ENCODE measurements at regions of chr11 and their contacts with region 1.

Region 1: GRCh38 chr11:36702330-36703055 is 104.5 kb upstream of the RAG2 start:
- DNase-seq: peak; percentile 73
- ATAC-seq: peak; percentile 91 to 98
- H3K4me3 ChIP-seq: no peak overlapping the region
- H3K27ac ChIP-seq: no peak overlapping the region
- H3K4me1 ChIP-seq: no peaks in the 10 kb centered on the region
- CTCF ChIP-seq: peak; percentile 80
- EP300 ChIP-seq: no peak
- POLR2A ChIP-seq: no peak
- RAD21 ChIP-seq: peak; percentile 87 to 89

Region 2: DNA sequence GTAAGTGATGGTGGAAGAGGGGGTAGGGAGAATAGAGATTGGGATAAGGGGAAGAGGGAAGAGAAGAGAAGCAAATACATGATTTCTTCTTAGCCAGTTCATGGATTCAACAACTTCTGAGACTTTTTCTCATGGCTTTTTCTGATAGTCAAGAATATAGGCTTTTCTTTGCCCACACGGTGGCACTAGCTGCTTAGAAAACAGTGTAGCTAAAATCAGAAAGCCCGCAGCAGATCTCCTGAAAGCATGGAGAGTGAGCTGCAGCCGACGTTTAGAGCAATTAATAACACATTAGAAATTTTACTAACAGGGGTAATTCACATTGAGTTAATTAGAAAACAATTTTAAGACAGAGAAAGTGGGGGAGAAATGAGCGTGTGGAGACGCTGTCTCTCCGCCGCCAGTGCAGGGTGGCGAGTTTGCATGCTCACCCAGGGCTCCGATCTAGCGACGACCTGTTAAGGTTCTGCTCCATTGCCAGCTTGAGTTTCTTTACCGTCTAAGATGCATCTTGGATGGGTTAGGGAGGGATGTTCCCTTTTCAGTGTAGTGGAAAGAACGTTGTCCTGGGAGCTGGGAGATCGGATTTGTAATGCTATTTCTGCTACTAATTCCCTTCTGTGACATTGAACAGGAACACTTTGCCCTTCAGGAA is 138.0 kb before region 1 on chr11:
- CTCF ChIA-PET with region 1: interaction called, 17 read pairs
- POLR2A ChIA-PET with region 1: no interaction called
- DNase-seq: peak; percentile 15 to 56
- ATAC-seq: peak; percentile 89 to 93
- H3K4me3 ChIP-seq: peak overlapping the region; percentile 30; the same call in 2 of the 3 replicates
- H3K27ac ChIP-seq: no peak overlapping the region
- H3K4me1 ChIP-seq: no peaks in the 10 kb centered on the region
- CTCF ChIP-seq: peak; percentile 88
- EP300 ChIP-seq: no peak
- POLR2A ChIP-seq: no peak
- RAD21 ChIP-seq: peak; percentile 81 to 86

Region 3: GRCh38 chr11:36622431-36623136 is 79.9 kb before region 1 on chr11:
- CTCF ChIA-PET with region 1: no interaction called
- POLR2A ChIA-PET with region 1: no interaction called
- DNase-seq: peak; percentile 4 to 40
- ATAC-seq: peak; percentile 84 to 87; a peak in 5 of 6 replicates
- H3K4me3 ChIP-seq: no peak overlapping the region
- H3K27ac ChIP-seq: no peak overlapping the region
- H3K4me1 ChIP-seq: no peaks in the 10 kb centered on the region
- CTCF ChIP-seq: peak; percentile 44
- EP300 ChIP-seq: no peak
- POLR2A ChIP-seq: no peak
- RAD21 ChIP-seq: peak; percentile 42 to 59; a peak in 4 of 5 replicates

Region 4: DNA sequence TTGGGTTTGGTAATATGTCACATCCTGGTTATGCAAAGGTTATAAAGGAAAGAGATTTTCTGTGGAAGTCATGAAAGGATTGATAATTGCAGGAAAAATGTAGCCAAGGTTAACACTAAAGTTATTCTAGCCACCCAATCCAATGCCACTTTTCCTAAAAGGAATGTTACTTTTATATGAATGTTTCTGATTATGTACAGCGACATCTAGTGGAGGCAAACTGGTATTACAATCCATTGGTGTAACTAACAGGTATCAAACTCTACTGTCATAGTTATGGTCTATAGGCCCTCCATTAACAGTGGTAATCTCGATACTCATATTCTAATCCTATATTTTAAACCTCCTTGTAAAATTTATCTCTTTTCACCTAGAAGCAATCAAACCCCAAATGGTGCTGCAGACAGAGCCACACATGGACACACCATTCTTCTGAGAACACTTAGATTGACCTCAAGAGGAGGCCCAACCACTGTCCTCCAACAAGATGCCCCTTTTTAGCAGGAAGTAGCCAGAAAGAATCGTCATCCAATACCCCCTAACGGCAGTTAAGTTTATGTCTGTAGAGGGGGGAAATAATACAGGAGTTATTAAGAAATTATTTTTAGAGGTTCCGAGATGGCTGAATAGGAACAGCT is 29.6 kb before region 1 on chr11:
- CTCF ChIA-PET with region 1: interaction called, 10 read pairs
- POLR2A ChIA-PET with region 1: no interaction called
- DNase-seq: peak in 1 of 2 experiments; percentile 58
- ATAC-seq: peak in 1 of 2 experiments; percentile 59; a peak in 3 of 6 replicates
- H3K4me3 ChIP-seq: no peak overlapping the region
- H3K27ac ChIP-seq: no peak overlapping the region
- H3K4me1 ChIP-seq: no peaks in the 10 kb centered on the region
- CTCF ChIP-seq: peak; percentile 57
- EP300 ChIP-seq: no peak
- POLR2A ChIP-seq: no peak
- RAD21 ChIP-seq: peak in 1 of 2 experiments; percentile 38; a peak in 2 of 5 replicates

Region 5: GRCh38 chr11:36688571-36689291 is 13.8 kb before region 1 on chr11:
- CTCF ChIA-PET with region 1: interaction called, 12 read pairs
- POLR2A ChIA-PET with region 1: no interaction called
- DNase-seq: no peak
- ATAC-seq: no peak
- H3K4me3 ChIP-seq: no peak overlapping the region
- H3K27ac ChIP-seq: no peak overlapping the region
- H3K4me1 ChIP-seq: no peaks in the 10 kb centered on the region
- CTCF ChIP-seq: no peak
- EP300 ChIP-seq: no peak
- POLR2A ChIP-seq: no peak
- RAD21 ChIP-seq: no peak

Region 6: GRCh38 chr11:36719358-36720107 is 17.0 kb after region 1 on chr11:
- CTCF ChIA-PET with region 1: interaction called, 11 read pairs
- POLR2A ChIA-PET with region 1: no interaction called
- DNase-seq: no peak
- ATAC-seq: peak in 1 of 2 experiments; percentile 39; a peak in 1 of 6 replicates
- H3K4me3 ChIP-seq: no peak overlapping the region
- H3K27ac ChIP-seq: no peak overlapping the region
- H3K4me1 ChIP-seq: no peaks in the 10 kb centered on the region
- CTCF ChIP-seq: no peak
- EP300 ChIP-seq: no peak
- POLR2A ChIP-seq: no peak
- RAD21 ChIP-seq: no peak

Region 7: GRCh38 chr11:36738292-36738861 is 35.9 kb after region 1 on chr11:
- CTCF ChIA-PET with region 1: interaction called, 29 read pairs
- POLR2A ChIA-PET with region 1: no interaction called
- DNase-seq: no peak
- ATAC-seq: no peak
- H3K4me3 ChIP-seq: no peak overlapping the region
- H3K27ac ChIP-seq: no peak overlapping the region
- H3K4me1 ChIP-seq: no peaks in the 10 kb centered on the region
- CTCF ChIP-seq: no peak
- EP300 ChIP-seq: no peak
- POLR2A ChIP-seq: no peak
- RAD21 ChIP-seq: no peak

Measured in A549 (cell line).